Activated CD8-positive, alpha-beta T cell treated with anti-CD3 and anti-CD28 coated beads for 36 hours (primary cell): ENCODE measurements at regions of chr7 and their contacts with region 1.

Region 1: GRCh38 chr7:142557971-142558582 is 191.2 kb upstream of the PRSS1 start:
- DNase-seq: peak; percentile 67
- ATAC-seq: peak; percentile 88
- H3K4me3 Mint-ChIP-seq: peak overlapping the region; percentile 37
- H3K27ac Mint-ChIP-seq: peak overlapping the region; percentile 1
- H3K4me1 Mint-ChIP-seq: no peaks in the 10 kb centered on the region
- H3K27me3 Mint-ChIP-seq: peaks cover 5% of the 10 kb centered on the region
- CTCF ChIP-seq: peak; percentile 65

Region 2: GRCh38 chr7:142063551-142064442 is 494.3 kb before region 1 on chr7:
- CTCF ChIA-PET with region 1: no interaction called
- POLR2A ChIA-PET with region 1: no interaction called
- intact Hi-C with region 1: no loop called
- DNase-seq: no peak
- ATAC-seq: no peak
- H3K4me3 Mint-ChIP-seq: no peak overlapping the region
- H3K27ac Mint-ChIP-seq: no peak overlapping the region
- H3K4me1 Mint-ChIP-seq: no peaks in the 10 kb centered on the region
- H3K27me3 Mint-ChIP-seq: no peaks in the 10 kb centered on the region
- CTCF ChIP-seq: no peak

Region 3: GRCh38 chr7:142301923-142302550 is 256.0 kb before region 1 on chr7:
- CTCF ChIA-PET with region 1: no interaction called
- POLR2A ChIA-PET with region 1: no interaction called
- intact Hi-C with region 1: no loop called
- DNase-seq: no peak
- ATAC-seq: peak; percentile 29
- H3K4me3 Mint-ChIP-seq: no peak overlapping the region
- H3K27ac Mint-ChIP-seq: no peak overlapping the region
- H3K4me1 Mint-ChIP-seq: peaks cover 16% of the 10 kb centered on the region
- H3K27me3 Mint-ChIP-seq: peaks cover 12% of the 10 kb centered on the region
- CTCF ChIP-seq: peak; percentile 72

Region 4: DNA sequence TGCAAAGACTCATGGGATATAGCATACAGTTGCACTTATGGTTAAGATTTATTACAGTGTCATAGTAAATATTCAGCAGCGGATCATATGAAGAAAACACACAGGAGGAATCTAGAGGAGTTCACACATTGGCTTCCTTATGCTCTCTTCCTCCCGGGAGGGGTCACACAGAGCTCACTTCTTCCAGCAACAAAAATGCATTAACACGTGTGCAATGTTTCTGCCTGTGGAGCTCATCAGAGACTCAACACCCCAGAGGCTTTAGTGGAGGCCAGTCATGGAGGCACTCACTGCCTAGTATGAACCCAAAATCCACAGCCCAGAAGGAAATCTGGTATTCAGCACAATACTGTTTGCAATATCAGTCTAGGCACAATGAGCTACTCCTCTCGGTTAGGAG is 11.6 kb before region 1 on chr7:
- CTCF ChIA-PET with region 1: interaction called, 11 read pairs
- POLR2A ChIA-PET with region 1: no interaction called
- intact Hi-C with region 1: no loop called
- DNase-seq: no peak
- ATAC-seq: no peak
- H3K4me3 Mint-ChIP-seq: no peak overlapping the region
- H3K27ac Mint-ChIP-seq: no peak overlapping the region
- H3K4me1 Mint-ChIP-seq: no peaks in the 10 kb centered on the region
- H3K27me3 Mint-ChIP-seq: no peaks in the 10 kb centered on the region
- CTCF ChIP-seq: no peak

Region 5: GRCh38 chr7:142568435-142569097 is 10.5 kb after region 1 on chr7:
- CTCF ChIA-PET with region 1: interaction called, 12 read pairs
- POLR2A ChIA-PET with region 1: no interaction called
- intact Hi-C with region 1: no loop called
- DNase-seq: no peak
- ATAC-seq: peak; percentile 56
- H3K4me3 Mint-ChIP-seq: no peak overlapping the region
- H3K27ac Mint-ChIP-seq: no peak overlapping the region
- H3K4me1 Mint-ChIP-seq: peaks cover 2% of the 10 kb centered on the region
- H3K27me3 Mint-ChIP-seq: peaks cover 1% of the 10 kb centered on the region
- CTCF ChIP-seq: no peak

Region 6: GRCh38 chr7:142581346-142581745 is 23.3 kb after region 1 on chr7:
- CTCF ChIA-PET with region 1: interaction called, 16 read pairs
- POLR2A ChIA-PET with region 1: interaction called, 3 read pairs
- intact Hi-C with region 1: no loop called
- DNase-seq: peak; percentile 36
- ATAC-seq: peak; percentile 62
- H3K4me3 Mint-ChIP-seq: peak overlapping the region; percentile 53
- H3K27ac Mint-ChIP-seq: peak overlapping the region; percentile 74
- H3K4me1 Mint-ChIP-seq: peaks cover 30% of the 10 kb centered on the region
- H3K27me3 Mint-ChIP-seq: no peaks in the 10 kb centered on the region
- CTCF ChIP-seq: no peak

Region 7: DNA sequence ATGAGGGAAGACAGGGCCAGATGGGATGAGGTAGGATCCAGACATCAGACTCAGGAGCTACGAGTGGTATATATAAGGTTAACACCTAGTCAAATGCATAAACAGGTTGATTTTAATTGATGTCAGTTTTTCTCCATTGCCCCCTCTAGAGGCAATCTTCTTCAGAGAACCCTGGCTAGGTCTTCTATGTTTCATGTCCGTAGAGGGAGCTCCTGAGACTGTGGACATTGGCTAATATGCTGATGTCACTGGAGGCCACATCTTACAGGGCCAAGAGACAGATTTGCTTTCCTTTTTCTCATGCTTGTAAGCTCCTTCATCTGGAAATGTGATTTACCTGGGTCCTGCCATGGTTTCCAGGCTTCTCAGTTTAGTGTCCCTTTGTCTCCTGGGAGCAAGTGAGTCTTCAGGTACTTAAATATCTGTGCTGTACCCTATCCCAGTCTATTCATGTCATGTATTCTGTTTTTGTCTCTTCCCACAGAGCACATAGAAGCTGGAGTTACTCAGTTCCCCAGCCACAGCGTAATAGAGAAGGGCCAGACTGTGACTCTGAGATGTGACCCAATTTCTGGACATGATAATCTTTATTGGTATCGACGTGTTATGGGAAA is 29.6 kb after region 1 on chr7:
- CTCF ChIA-PET with region 1: interaction called, 23 read pairs
- POLR2A ChIA-PET with region 1: no interaction called
- intact Hi-C with region 1: no loop called
- DNase-seq: no peak
- ATAC-seq: peak; percentile 79
- H3K4me3 Mint-ChIP-seq: peak overlapping the region; percentile 45
- H3K27ac Mint-ChIP-seq: peak overlapping the region; percentile 52
- H3K4me1 Mint-ChIP-seq: peaks cover 8% of the 10 kb centered on the region
- H3K27me3 Mint-ChIP-seq: no peaks in the 10 kb centered on the region
- CTCF ChIP-seq: peak; percentile 60